AG04449 (cell line): ENCODE measurements at regions of chr9 and their contacts with region 1.

Region 1: GRCh38 chr9:114653556-114654159 is 3.9 kb downstream of the TEX53 start:
- DNase-seq: no peak
- H3K4me3 ChIP-seq: no peak overlapping the region
- CTCF ChIP-seq: peak; percentile 82

Region 2: DNA sequence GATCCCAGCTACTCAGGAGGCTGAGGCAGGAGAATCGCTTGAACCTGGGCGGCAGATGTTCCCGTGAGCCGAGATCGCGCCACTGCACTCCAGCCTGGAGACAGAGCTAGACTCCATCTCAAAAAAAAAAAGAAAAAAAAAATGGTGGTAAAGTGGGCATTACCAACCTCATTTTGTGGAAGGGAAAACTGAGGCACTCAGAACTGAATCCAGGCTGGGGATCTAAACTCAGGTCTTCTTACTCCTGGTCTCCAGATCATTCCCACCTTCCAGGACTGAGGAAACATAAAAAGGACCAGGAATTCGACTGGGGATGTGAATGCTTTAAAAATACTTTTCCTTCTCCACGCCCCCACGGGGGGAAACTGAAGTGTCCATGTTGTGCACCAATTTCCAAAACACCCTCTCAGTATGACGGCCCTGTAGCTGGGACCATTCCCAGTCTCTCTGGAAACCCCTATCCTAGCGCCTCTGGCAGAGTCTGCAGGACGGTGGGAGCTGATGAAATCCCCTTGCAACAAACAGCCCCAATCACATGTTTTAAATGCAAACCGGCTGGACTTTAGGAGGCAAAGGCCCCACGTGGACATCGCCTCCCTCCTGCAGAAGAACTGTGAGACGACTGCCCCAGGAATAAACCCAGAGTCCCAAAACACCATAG is 257.0 kb before region 1 on chr9:
- CTCF ChIA-PET with region 1: interaction called, 14 read pairs
- POLR2A ChIA-PET with region 1: no interaction called
- DNase-seq: no peak
- H3K4me3 ChIP-seq: peak overlapping the region; percentile 87
- CTCF ChIP-seq: no peak

Region 3: GRCh38 chr9:114434878-114435311 is 218.8 kb before region 1 on chr9:
- CTCF ChIA-PET with region 1: interaction called, 367 read pairs
- POLR2A ChIA-PET with region 1: no interaction called
- DNase-seq: no peak
- H3K4me3 ChIP-seq: no peak overlapping the region
- CTCF ChIP-seq: peak; percentile 66

Region 4: DNA sequence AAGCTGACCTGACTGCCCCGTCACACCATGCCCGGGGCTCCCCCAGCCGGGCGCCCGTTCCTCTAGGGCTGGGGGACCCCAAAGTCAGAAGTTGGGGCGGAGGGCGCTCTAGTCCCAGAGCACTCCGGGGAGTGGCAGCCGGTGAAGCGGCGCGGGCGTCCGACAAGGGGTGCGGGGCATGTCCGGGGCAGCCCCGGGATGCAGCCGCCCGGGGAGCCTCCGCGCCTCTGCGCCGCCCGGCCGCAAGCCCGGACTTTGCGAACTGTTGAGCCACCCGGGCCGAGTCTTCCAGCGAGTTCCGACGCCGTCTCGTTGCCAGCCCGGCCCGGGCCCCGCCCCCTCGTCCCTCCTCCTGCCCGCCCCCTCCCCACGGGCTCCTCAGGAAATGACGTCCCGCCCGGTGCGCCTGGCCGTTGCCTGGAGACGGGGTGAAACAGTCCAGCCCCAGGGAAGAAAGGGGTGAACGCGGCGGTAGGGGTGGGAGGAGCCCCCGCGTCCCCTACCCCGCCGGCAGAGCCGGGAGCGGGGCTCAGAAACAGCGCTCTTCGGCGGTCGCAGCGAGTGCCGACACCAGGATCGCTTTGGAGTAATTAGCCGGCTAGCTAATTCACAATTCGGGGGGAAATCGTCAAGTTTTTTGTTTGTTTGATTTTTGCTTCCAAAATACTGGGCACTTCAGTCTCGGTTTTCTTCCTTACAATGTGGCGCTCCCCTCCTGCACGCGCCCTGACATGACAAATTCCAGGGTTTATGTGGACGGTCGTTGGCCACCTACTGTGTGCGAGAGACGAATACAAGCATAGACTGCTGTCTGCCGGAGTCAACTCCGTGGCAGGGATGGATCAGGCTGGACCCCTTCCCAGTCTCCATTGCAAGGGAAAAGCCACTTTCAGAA is 148.2 kb before region 1 on chr9 and contains the start of gene WHRN:
- CTCF ChIA-PET with region 1: interaction called, 31 read pairs
- POLR2A ChIA-PET with region 1: no interaction called
- DNase-seq: no peak
- H3K4me3 ChIP-seq: peak within 1 kb of the TSS; percentile 70
- CTCF ChIP-seq: no peak

Region 5: GRCh38 chr9:114629563-114630090 is 24.0 kb before region 1 on chr9:
- CTCF ChIA-PET with region 1: interaction called, 13 read pairs
- POLR2A ChIA-PET with region 1: no interaction called
- DNase-seq: no peak
- H3K4me3 ChIP-seq: no peak overlapping the region
- CTCF ChIP-seq: no peak

Region 6: GRCh38 chr9:114906908-114907571 is 253.4 kb after region 1 on chr9:
- CTCF ChIA-PET with region 1: interaction called, 156 read pairs
- POLR2A ChIA-PET with region 1: no interaction called
- DNase-seq: no peak
- H3K4me3 ChIP-seq: no peak overlapping the region
- CTCF ChIP-seq: peak; percentile 75